PC-3 (cell line): ENCODE measurements at regions of chr20 and their contacts with region 1.

Region 1: DNA sequence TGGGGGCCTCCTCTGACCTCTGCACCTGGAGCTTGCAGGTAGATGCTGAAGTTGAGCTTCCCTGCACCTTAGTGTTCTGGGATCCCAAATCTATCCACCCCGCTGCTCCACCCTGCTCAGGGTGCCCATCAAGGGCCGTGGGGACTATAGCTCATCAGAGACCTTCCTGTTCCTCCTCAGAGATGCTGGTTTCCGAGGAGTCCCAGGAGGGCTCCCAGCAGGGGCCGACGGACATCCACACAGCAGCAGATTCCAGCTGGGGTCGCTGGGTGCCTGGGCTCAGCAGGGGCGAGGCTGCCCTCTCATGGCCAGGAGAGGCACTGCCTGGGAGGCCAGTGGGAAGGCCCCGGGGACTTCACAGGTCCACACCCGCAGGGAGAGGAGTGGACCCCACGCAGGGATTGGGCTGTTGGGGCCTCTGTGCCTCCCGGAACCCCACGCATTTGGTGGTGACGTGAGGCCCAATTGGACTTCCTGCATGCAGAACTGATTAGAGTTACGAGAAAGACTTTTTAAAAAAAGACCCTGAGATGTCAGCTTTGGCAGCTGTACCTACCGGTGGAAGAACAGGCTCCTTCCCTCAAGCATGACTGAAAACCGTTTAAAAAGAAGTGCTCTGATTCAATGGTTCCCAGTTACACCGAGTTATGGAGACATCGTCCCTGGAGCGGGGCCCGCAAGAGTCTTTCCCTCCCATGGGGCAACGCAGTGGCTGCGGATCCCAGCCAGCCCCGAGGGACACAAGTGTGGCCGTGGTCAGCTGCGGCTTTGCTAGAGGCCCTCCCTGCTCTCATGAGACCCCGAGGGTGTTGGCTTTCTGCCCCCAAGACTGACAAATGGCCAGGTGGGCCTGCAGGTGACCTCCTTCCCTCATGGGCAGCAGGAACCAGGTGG is 25.3 kb upstream of the SLCO4A1 start:
- DNase-seq: peak; percentile 85
- ATAC-seq: peak; percentile 73
- H3K4me3 ChIP-seq: no peak overlapping the region
- H3K27ac ChIP-seq: peak overlapping the region; percentile 91
- H3K4me1 ChIP-seq: peaks cover 36% of the 10 kb centered on the region
- H3K27me3 ChIP-seq: no peaks in the 10 kb centered on the region
- CTCF ChIP-seq: peak; percentile 99

Region 2: DNA sequence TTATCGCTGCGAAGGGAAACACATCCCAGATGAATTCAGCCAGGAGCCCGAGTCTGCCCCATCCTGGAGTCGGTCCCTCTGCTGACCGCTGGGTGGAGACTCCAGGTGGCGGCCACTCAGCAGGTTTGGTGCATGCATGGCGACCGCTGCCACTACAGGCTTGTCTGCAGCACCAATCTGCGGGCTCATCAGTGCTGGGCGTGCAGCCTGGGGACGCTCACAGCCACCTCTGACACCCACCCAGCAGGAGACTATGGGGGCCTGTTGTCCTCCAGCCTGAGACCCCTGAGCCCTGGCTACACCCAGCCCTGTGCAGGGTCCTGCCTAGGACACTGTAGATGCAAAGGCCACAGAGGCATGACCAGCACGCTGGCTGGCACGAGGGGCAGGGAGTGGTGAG is 100.6 kb before region 1 on chr20:
- CTCF ChIA-PET with region 1: interaction called, 4 read pairs
- POLR2A ChIA-PET with region 1: no interaction called
- intact Hi-C with region 1: loop called (anchors 1 kb)
- DNase-seq: peak; percentile 61
- ATAC-seq: peak; percentile 98
- H3K4me3 ChIP-seq: no peak overlapping the region
- H3K27ac ChIP-seq: no peak overlapping the region
- H3K4me1 ChIP-seq: no peaks in the 10 kb centered on the region
- H3K27me3 ChIP-seq: no peaks in the 10 kb centered on the region
- CTCF ChIP-seq: peak; percentile 69

Region 3: GRCh38 chr20:62603021-62603906 is 13.7 kb before region 1 on chr20:
- CTCF ChIA-PET with region 1: interaction called, 13 read pairs
- POLR2A ChIA-PET with region 1: no interaction called
- intact Hi-C with region 1: loop called (anchors 2 kb)
- DNase-seq: peak; percentile 98
- ATAC-seq: peak; percentile 76
- H3K4me3 ChIP-seq: peak overlapping the region; percentile 65
- H3K27ac ChIP-seq: peak overlapping the region; percentile 98
- H3K4me1 ChIP-seq: peaks cover 75% of the 10 kb centered on the region
- H3K27me3 ChIP-seq: no peaks in the 10 kb centered on the region
- CTCF ChIP-seq: no peak

Region 4: DNA sequence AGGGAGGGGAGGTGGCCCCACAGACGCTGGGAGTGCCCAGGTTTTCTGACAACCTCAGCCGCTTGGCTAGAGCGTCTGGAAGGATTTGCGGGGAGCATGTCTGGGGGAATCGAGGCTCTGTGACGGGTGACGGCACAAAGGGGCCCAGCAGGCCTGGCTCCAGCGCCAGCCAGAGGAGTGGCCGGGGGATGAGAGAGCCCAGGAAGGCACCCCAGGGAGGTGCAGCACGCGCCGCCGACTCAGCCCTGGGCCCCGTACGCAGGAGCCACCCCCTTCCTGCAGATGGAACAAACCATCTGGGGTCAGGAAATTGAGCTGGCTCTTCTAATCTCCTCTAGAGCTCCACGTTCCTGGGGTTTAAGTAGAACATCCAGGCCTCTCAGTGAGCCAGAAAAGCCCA is 19.5 kb after region 1 on chr20:
- CTCF ChIA-PET with region 1: no interaction called
- POLR2A ChIA-PET with region 1: no interaction called
- intact Hi-C with region 1: no loop called
- DNase-seq: no peak
- ATAC-seq: no peak
- H3K4me3 ChIP-seq: no peak overlapping the region
- H3K27ac ChIP-seq: no peak overlapping the region
- H3K4me1 ChIP-seq: peaks cover 10% of the 10 kb centered on the region
- H3K27me3 ChIP-seq: no peaks in the 10 kb centered on the region
- CTCF ChIP-seq: no peak

Region 5: GRCh38 chr20:62652051-62652926 is 35.3 kb after region 1 on chr20:
- CTCF ChIA-PET with region 1: interaction called, 7 read pairs
- POLR2A ChIA-PET with region 1: no interaction called
- intact Hi-C with region 1: loop called (anchors 5 kb)
- DNase-seq: peak; percentile 84
- ATAC-seq: peak; percentile 60
- H3K4me3 ChIP-seq: peak overlapping the region; percentile 54
- H3K27ac ChIP-seq: peak overlapping the region; percentile 84
- H3K4me1 ChIP-seq: peaks cover 34% of the 10 kb centered on the region
- H3K27me3 ChIP-seq: no peaks in the 10 kb centered on the region
- CTCF ChIP-seq: no peak; the same call in 1 of the 2 replicates